CD4-positive, alpha-beta memory T cell (primary cell): ENCODE measurements at regions of chr6 and their contacts with region 1.

Region 1: GRCh38 chr6:32971581-32972352 is 3.4 kb downstream of the BRD2 start:
- DNase-seq: peak; percentile 100
- H3K4me3 ChIP-seq: peak overlapping the region; percentile 90 to 95
- H3K4me3 Mint-ChIP-seq: peak overlapping the region; percentile 91 to 99 (median 95)
- H3K27ac ChIP-seq: peak overlapping the region; percentile 95
- H3K27ac Mint-ChIP-seq: peak overlapping the region; percentile 99 to 100 (median 100)
- H3K4me1 ChIP-seq: peaks cover 36% of the 10 kb centered on the region
- H3K4me1 Mint-ChIP-seq: peaks cover 26 to 84% (median 33%) of the 10 kb centered on the region in 4 donors
- H3K27me3 ChIP-seq: no peaks in the 10 kb centered on the region
- H3K27me3 Mint-ChIP-seq: no peaks in the 10 kb centered on the region

Region 2: DNA sequence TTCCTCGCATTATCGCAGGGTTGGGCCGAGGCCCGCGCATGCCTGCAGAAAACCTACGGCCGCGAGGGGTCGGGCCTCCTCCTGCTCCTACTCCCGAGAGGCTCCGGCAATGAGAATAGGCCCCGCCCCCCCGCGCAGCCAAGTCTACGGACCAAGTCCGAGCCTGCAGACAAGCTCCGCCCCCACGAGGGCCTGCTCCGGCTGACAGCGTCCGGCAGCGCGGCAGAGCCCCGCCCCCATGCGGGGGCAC is 776.2 kb before region 1 on chr6:
- CTCF ChIA-PET with region 1: interaction called, 3 read pairs
- POLR2A ChIA-PET with region 1: interaction called, 18 read pairs
- intact Hi-C with region 1: loop called (anchors 2 kb)
- DNase-seq: peak; percentile 99 to 100 (median 100)
- H3K4me3 ChIP-seq: peak overlapping the region in 1 of 2 donors; percentile 97
- H3K4me3 Mint-ChIP-seq: peak overlapping the region; percentile 93 to 100 (median 98)
- H3K27ac ChIP-seq: peak overlapping the region; percentile 98
- H3K27ac Mint-ChIP-seq: peak overlapping the region; percentile 97 to 100 (median 99)
- H3K4me1 ChIP-seq: peaks cover 33% of the 10 kb centered on the region
- H3K4me1 Mint-ChIP-seq: peaks cover 23 to 58% (median 27%) of the 10 kb centered on the region in 4 donors
- H3K27me3 ChIP-seq: no peaks in the 10 kb centered on the region
- H3K27me3 Mint-ChIP-seq: peaks cover 0 to 2% of the 10 kb centered on the region in 2 donors

Region 3: DNA sequence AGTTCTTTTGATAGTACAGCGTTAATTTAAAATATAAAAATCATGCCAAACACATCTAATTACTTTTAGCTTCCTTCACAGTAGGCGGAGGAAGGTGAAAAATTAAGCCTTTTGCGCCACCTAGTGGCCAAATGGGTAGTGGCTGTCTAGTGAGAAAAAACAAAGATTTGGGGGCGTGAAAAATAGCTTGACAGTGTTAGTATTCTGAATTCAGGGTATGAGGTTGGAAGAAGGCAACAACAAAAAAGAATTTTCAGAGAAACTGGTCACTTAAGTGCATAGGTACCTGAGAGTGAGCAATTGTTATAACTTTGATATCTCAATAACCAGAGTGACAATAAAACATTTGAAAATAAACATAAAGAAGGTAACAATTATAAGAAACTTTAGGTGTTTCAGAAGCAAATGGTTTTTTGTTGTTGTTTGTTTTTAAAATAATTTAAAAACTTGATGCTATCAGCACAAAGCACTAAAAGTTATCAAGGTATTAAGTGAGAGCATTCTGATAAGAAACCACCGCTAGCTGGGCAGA is 103.4 kb before region 1 on chr6:
- CTCF ChIA-PET with region 1: interaction called, 5 read pairs
- POLR2A ChIA-PET with region 1: interaction called, 30 read pairs
- intact Hi-C with region 1: no loop called
- DNase-seq: peak; percentile 80 to 85 (median 84)
- H3K4me3 ChIP-seq: no peak overlapping the region
- H3K4me3 Mint-ChIP-seq: no peak overlapping the region
- H3K27ac ChIP-seq: no peak overlapping the region
- H3K27ac Mint-ChIP-seq: peak overlapping the region in 1 of 7 donors; percentile 0
- H3K4me1 ChIP-seq: peaks cover 21% of the 10 kb centered on the region
- H3K4me1 Mint-ChIP-seq: peaks cover 19 to 35% (median 28%) of the 10 kb centered on the region in 4 donors
- H3K27me3 ChIP-seq: no peaks in the 10 kb centered on the region
- H3K27me3 Mint-ChIP-seq: peaks cover 0 to 3% of the 10 kb centered on the region in 2 donors

Region 4: GRCh38 chr6:32947552-32948465 is 24.0 kb before region 1 on chr6:
- CTCF ChIA-PET with region 1: interaction called, 631 read pairs
- POLR2A ChIA-PET with region 1: interaction called, 698 read pairs
- intact Hi-C with region 1: loop called (anchors 1 kb)
- DNase-seq: peak in 4 of 5 donors; percentile 34 to 49 (median 44)
- H3K4me3 ChIP-seq: no peak overlapping the region
- H3K4me3 Mint-ChIP-seq: no peak overlapping the region
- H3K27ac ChIP-seq: no peak overlapping the region
- H3K27ac Mint-ChIP-seq: peak overlapping the region in 5 of 7 donors; percentile 7 to 38 (median 25)
- H3K4me1 ChIP-seq: peaks cover 37% of the 10 kb centered on the region
- H3K4me1 Mint-ChIP-seq: peaks cover 31 to 58% (median 38%) of the 10 kb centered on the region in 4 donors
- H3K27me3 ChIP-seq: no peaks in the 10 kb centered on the region
- H3K27me3 Mint-ChIP-seq: no peaks in the 10 kb centered on the region

Region 5: DNA sequence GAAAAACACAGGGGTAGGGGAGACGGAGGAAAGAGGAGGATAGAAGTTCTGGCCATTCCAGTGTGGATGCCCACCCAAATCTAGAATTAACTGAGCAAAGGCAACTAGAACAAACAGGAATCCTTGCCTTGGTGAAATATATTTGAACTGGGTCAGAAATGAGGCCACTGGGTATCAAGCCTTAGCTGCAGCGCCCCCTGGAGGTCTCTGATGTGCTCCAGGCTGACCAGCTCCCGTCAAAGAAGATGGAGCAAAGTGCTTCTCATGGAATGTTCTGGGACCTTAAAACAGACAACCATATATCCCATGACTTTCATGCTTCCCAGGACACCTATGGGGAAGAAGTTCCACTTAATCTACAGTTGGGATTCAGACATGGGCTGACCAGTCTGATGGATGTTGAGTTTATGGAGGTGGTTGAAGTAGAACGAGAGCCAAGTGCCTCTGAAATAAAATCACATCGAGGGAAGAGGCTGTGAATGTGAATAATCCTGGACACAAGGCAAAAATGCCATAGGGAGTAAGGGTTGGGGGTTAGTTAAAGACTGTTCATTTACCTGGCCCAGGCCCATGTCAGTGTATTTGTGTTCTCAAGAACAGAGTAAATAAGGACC is 154.4 kb after region 1 on chr6:
- CTCF ChIA-PET with region 1: no interaction called
- POLR2A ChIA-PET with region 1: no interaction called
- intact Hi-C with region 1: no loop called
- DNase-seq: peak in 4 of 5 donors; percentile 26 to 41 (median 35)
- H3K4me3 ChIP-seq: no peak overlapping the region
- H3K4me3 Mint-ChIP-seq: no peak overlapping the region
- H3K27ac ChIP-seq: no peak overlapping the region
- H3K27ac Mint-ChIP-seq: no peak overlapping the region
- H3K4me1 ChIP-seq: no peaks in the 10 kb centered on the region
- H3K4me1 Mint-ChIP-seq: no peaks in the 10 kb centered on the region
- H3K27me3 ChIP-seq: no peaks in the 10 kb centered on the region
- H3K27me3 Mint-ChIP-seq: peaks cover 19 to 28% of the 10 kb centered on the region in 2 donors

Region 6: GRCh38 chr6:33248925-33249731 is 277.4 kb after region 1 on chr6:
- CTCF ChIA-PET with region 1: no interaction called
- POLR2A ChIA-PET with region 1: interaction called, 21 read pairs
- intact Hi-C with region 1: no loop called
- DNase-seq: peak; percentile 94 to 98 (median 97)
- H3K4me3 ChIP-seq: peak overlapping the region; percentile 60 to 65
- H3K4me3 Mint-ChIP-seq: peak overlapping the region; percentile 84 to 95 (median 88)
- H3K27ac ChIP-seq: peak overlapping the region; percentile 93
- H3K27ac Mint-ChIP-seq: peak overlapping the region; percentile 90 to 98 (median 97)
- H3K4me1 ChIP-seq: peaks cover 26% of the 10 kb centered on the region
- H3K4me1 Mint-ChIP-seq: peaks cover 19 to 47% (median 30%) of the 10 kb centered on the region in 4 donors
- H3K27me3 ChIP-seq: no peaks in the 10 kb centered on the region
- H3K27me3 Mint-ChIP-seq: peaks cover 0 to 3% of the 10 kb centered on the region in 2 donors

Region 7: DNA sequence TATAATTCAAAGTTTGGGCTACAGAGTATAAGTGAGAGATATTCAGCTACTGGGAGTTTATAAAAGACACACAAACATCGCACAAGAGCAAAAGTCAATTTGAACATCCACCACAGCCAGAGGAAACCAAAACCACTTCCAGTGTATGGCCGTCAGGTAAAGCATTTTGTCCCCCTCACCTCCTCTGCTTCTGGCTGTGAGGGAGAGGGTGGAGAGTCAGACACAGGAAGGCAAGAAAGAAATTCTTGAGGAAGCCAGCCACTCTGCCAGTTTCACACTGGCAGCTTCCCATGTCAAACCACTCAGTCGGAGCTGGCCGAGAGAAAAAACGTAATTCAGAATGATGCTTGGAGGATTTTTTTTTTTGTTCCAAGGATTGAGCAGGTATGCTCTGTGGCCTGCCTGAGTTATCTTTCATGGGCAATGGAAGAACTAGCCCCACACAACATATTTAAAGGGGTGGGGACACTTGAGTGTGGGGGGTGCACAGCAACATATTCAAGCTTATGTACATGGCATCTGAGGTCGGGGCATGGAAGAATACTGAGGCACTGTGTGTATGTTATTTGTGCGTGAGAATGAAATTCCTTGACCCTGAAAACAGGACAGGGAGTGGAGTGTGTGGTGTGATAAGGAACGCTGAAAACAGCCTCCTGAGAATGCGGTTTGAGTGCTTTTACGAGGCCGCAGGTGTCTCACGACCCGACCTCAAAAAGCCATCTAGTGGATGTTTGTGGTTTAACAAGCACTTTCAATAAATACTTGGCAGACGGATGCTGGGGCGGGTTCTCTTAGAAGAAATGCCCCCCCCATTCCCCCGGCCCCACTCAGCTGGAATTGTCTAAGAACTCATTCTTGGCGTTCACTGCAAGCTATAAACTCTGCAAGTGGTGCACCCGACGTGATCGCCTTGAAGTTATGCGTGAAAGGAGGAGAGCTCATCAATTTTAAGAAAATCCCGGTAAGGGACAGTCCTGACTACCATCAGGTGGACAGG is 373.2 kb after region 1 on chr6:
- CTCF ChIA-PET with region 1: no interaction called
- POLR2A ChIA-PET with region 1: interaction called, 14 read pairs
- intact Hi-C with region 1: no loop called
- DNase-seq: peak; percentile 81 to 87 (median 84)
- H3K4me3 ChIP-seq: peak overlapping the region; percentile 11 to 61
- H3K4me3 Mint-ChIP-seq: peak overlapping the region; percentile 76 to 92 (median 85)
- H3K27ac ChIP-seq: peak overlapping the region; percentile 79
- H3K27ac Mint-ChIP-seq: peak overlapping the region; percentile 88 to 99 (median 98)
- H3K4me1 ChIP-seq: peaks cover 44% of the 10 kb centered on the region
- H3K4me1 Mint-ChIP-seq: peaks cover 23 to 49% (median 37%) of the 10 kb centered on the region in 4 donors
- H3K27me3 ChIP-seq: no peaks in the 10 kb centered on the region
- H3K27me3 Mint-ChIP-seq: no peaks in the 10 kb centered on the region

Region 8: DNA sequence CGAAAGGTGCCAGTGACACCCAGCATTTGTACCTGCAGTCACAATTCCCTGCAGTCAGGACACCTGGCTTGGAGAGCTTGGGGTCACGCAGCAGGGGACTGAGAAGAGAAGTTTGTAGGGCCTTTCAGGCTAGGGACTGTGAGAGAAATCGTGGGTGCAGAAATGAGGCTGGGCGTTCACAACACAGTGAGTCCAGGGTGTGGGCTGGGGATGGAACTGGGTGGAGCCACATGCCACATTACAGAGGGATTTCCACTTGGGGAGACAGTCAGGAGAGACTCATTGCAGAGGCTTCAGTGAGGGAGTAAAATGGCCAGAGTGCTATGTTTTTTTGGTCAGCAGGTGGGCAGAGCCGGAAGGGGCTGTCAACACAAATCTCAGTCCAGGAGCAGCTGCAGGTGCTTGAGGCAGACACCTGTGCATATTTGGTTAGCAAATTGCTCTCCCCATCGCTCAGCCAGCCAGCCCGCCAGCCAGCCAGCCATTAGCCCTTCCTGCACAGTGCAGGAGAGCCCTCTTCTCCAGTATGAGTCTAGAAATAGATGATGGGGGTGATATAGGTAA is 656.7 kb after region 1 on chr6:
- CTCF ChIA-PET with region 1: no interaction called
- POLR2A ChIA-PET with region 1: no interaction called
- intact Hi-C with region 1: no loop called
- DNase-seq: no peak
- H3K4me3 ChIP-seq: no peak overlapping the region
- H3K4me3 Mint-ChIP-seq: peak overlapping the region in 1 of 8 donors; percentile 5
- H3K27ac ChIP-seq: no peak overlapping the region
- H3K27ac Mint-ChIP-seq: peak overlapping the region in 6 of 7 donors; percentile 13 to 85 (median 42)
- H3K4me1 ChIP-seq: peaks cover 52% of the 10 kb centered on the region
- H3K4me1 Mint-ChIP-seq: peaks cover 38 to 69% (median 52%) of the 10 kb centered on the region in 4 donors
- H3K27me3 ChIP-seq: no peaks in the 10 kb centered on the region
- H3K27me3 Mint-ChIP-seq: no peaks in the 10 kb centered on the region